ENCODE measurements at regions of chr14 and their contacts with region 1.

Region 1: GRCh38 chr14:49862089-49862673 is 9.6 kb upstream of the NEMF start:
- DNase-seq: peak; percentile 84
- H3K4me3 ChIP-seq: peak overlapping the region; percentile 62
- H3K27ac ChIP-seq: peak overlapping the region; percentile 100
- H3K27me3 ChIP-seq: no peaks in the 10 kb centered on the region
- CTCF ChIP-seq: peak; percentile 100

Region 2: DNA sequence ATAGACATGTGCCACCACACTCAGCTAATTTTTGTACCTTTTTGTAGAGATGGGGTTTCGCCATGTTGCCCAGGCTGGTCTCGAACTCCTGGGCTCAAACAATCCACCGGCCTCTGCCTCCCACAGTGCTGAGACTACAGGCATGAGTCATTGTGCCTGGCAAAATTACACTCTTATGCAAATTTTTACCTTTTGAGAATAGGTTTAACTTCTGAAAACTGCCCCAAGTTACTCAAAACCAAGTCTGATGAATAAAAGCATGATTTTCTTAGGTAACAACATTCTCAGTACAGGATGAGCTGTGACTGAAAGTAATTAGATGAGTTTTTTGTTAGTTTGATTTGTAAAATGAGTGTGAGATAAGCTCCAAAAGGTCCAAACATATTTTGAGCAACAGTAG is 442.0 kb before region 1 on chr14:
- CTCF ChIA-PET with region 1: no interaction called
- POLR2A ChIA-PET with region 1: no interaction called
- DNase-seq: no peak
- H3K4me3 ChIP-seq: no peak overlapping the region
- H3K27ac ChIP-seq: no peak overlapping the region
- H3K27me3 ChIP-seq: no peaks in the 10 kb centered on the region
- CTCF ChIP-seq: no peak

Region 3: GRCh38 chr14:49732896-49733295 is 129.3 kb before region 1 on chr14:
- CTCF ChIA-PET with region 1: interaction called, 12 read pairs
- POLR2A ChIA-PET with region 1: no interaction called
- DNase-seq: no peak
- H3K4me3 ChIP-seq: no peak overlapping the region
- H3K27ac ChIP-seq: no peak overlapping the region
- H3K27me3 ChIP-seq: no peaks in the 10 kb centered on the region
- CTCF ChIP-seq: no peak

Region 4: DNA sequence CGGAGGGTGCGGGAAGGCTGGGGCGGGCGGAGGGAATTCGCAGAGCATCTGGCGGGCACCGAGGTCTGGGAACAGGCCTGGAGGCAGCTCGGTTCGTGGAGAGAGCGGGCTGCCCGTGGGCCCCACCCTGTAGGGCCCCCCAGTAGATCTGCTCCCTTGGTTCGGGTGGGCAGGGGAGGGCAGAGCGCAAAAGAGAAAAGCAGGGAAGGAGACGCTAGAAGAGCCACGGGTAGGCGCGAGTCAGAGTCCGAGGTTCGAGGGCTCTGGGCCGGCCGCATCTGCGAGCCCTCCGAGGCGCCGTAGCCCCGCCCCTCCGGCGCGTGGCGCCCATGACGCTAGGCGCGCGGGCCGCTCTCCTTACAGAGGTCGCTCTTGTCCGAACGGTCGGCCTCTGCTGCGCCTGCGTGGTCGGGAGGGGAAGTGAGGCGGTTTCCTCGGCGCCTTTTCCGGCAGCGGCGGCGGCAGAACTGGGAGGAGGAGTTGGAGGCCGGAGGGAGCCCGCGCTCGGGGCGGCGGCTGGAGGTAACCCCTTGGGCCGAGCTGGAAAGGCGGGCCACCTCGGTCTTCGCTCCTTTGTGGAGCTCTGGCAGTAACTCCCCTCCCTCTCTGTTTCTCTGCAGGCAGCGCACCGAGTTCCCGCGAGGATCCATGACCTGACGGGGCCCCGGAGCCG is 30.6 kb after region 1 on chr14 and contains the start of gene ARF6:
- CTCF ChIA-PET with region 1: interaction called, 7 read pairs
- POLR2A ChIA-PET with region 1: interaction called, 13 read pairs
- DNase-seq: peak; percentile 88
- H3K4me3 ChIP-seq: peak within 1 kb of the TSS; percentile 95
- H3K27ac ChIP-seq: peak within 1 kb of the TSS; percentile 98
- H3K27me3 ChIP-seq: no peaks in the 10 kb centered on the region
- CTCF ChIP-seq: peak; percentile 14
- polyA plus RNA-seq, gene ARF6: 27.1 and 28.0 TPM in 2 replicates

Region 5: DNA sequence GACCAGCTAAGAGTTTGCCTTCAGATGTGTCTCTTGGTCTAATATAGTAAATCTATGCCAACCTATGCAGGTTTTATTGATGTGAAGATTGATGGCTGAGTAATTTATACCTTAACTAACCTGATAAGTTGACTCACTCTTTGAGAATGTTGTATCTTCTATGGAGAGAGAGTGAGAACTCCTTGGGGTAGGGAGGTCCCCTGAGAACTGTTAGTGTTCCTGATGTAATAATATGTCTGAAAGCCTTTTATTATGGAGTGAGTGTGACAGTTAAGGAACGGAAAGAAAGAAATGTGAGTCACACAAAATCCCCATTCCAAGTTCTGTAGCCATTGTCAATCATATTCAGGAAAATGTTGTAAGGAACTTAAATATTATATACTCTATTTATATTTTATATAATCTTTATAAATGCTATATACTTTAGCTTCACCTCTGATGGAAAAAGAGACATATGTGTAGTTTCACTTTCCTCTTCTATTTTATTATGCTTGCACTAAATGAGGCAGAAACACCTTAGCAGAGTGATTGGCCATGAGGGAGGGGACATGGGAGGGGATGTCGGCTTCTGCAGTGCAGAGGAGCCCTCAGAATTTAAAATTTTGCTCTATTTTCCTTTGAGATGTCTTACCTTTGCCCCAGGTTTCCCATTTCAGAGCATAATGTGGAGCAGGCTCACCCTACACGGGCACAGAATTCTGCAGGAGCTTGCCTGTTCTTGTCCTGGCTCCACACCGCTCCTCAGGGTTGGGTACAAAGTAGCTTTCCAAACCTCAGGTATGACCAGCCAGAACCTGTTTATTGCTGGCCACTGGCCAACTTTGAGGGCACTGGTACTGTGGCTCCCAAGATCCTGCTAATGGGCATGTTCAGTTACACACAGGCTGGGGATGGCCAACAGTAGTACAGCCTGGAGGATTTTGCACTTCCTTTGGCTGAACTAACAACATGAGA is 88.4 kb after region 1 on chr14:
- CTCF ChIA-PET with region 1: interaction called, 14 read pairs
- POLR2A ChIA-PET with region 1: no interaction called
- DNase-seq: no peak
- H3K4me3 ChIP-seq: no peak overlapping the region
- H3K27ac ChIP-seq: no peak overlapping the region
- H3K27me3 ChIP-seq: no peaks in the 10 kb centered on the region
- CTCF ChIP-seq: no peak

Region 6: GRCh38 chr14:50060871-50061663 is 198.9 kb after region 1 on chr14:
- CTCF ChIA-PET with region 1: interaction called, 29 read pairs
- POLR2A ChIA-PET with region 1: no interaction called
- DNase-seq: peak; percentile 76
- H3K4me3 ChIP-seq: no peak overlapping the region
- H3K27ac ChIP-seq: peak overlapping the region; percentile 99
- H3K27me3 ChIP-seq: no peaks in the 10 kb centered on the region
- CTCF ChIP-seq: peak; percentile 34

Region 7: GRCh38 chr14:50091240-50091913 is 229.2 kb after region 1 on chr14:
- CTCF ChIA-PET with region 1: interaction called, 28 read pairs
- POLR2A ChIA-PET with region 1: interaction called, 3 read pairs
- DNase-seq: no peak
- H3K4me3 ChIP-seq: no peak overlapping the region
- H3K27ac ChIP-seq: no peak overlapping the region
- H3K27me3 ChIP-seq: no peaks in the 10 kb centered on the region
- CTCF ChIP-seq: no peak

Region 8: DNA sequence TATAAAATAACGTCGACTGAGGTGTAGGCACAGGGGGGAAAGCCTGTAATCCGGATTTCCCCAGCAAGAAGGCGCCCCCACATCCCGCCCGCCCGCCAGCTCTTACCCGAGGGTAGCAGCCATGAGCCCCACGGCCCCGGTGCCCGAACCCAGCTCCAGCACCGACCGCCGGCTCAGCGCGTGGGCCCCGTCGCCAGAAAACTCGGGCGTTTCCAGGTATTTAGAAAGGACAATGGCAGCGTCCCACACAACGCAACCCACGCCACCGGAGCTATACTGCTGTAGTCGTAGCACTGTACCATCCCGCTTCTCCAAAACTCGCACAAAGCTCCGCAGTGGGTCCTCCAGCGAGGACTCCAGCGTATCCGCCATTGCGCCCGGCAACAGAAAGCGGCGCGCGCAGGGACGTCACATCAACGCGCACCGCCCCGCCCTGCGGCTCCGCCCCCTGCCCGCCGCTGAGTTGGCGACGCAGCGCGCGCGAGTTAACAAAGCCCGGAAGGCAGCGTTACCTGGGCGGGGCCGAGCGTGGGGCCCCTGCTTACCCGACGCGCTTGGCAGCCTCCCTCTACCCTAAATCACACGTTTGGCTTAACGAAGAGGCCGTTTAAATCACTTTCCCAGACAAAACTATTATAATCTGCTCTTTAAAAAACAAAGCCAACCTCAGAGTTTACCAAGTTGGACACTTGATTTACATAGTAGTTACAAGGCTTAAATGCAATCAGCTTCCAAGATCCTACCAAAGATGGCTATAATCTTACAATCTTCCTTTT is 254.2 kb after region 1 on chr14 and contains the start of gene VCPKMT:
- CTCF ChIA-PET with region 1: interaction called, 97 read pairs
- POLR2A ChIA-PET with region 1: interaction called, 8 read pairs
- DNase-seq: peak; percentile 44
- H3K4me3 ChIP-seq: peak within 1 kb of the TSS; percentile 89
- H3K27ac ChIP-seq: peak within 1 kb of the TSS; percentile 41
- H3K27me3 ChIP-seq: no peaks in the 10 kb centered on the region
- CTCF ChIP-seq: no peak
- polyA plus RNA-seq, gene VCPKMT: 5.1 and 7.7 TPM in 2 replicates

Measured in AG04450 (cell line).